ENCODE measurements at regions of chr5 and their contacts with region 1.

Region 1: DNA sequence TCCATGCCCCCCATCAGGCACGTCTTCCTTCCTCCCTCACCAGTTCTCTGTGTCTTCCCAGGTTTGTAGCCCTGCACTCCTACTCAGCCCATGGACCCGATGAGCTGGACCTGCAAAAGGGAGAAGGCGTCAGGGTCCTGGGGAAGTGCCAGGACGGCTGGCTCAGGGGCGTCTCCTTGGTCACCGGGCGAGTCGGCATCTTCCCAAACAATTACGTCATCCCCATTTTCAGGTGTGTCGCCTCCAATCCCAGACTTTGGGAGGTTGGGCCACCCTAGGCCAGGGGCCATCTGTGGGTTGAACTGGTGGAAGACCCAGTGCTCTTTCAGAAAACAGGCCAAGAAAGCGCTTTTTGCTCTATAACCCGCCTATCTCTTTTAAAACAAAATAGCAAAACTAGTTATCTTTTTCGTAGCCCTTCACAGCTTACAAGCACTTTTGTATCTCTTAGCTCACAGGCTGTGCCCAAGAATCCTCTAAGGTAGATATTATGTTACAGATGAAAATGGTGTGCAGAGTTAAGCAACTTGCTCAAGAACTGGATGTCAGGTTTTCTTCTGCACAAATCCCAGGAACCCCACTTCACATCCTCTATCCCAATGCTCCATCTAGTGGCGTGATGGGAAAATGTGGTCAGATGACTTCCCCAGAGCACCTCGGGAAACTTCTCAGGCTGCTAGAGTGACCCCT is 56.2 kb downstream of the PLAC8L1 start:
- ATAC-seq: peak; percentile 50 to 90 (median 76)
- H3K4me3 ChIP-seq: no peak overlapping the region
- H3K27ac ChIP-seq: no peak overlapping the region
- H3K4me1 ChIP-seq: peaks cover 0 to 4% of the 10 kb centered on the region in 2 donors

Region 2: GRCh38 chr5:144191998-144192397 is 1857.2 kb before region 1 on chr5:
- in situ Hi-C with region 1: loop called in 2 of 9 experiments (anchors 25 kb)
- ATAC-seq: peak in 4 of 8 experiments; percentile 54 to 86 (median 78)
- H3K4me3 ChIP-seq: no peak overlapping the region
- H3K27ac ChIP-seq: no peak overlapping the region
- H3K4me1 ChIP-seq: no peaks in the 10 kb centered on the region

Region 3: GRCh38 chr5:145681686-145682085 is 367.5 kb before region 1 on chr5:
- in situ Hi-C with region 1: loop called in 1 of 9 experiments (anchors 25 kb)
- ATAC-seq: peak in 5 of 8 experiments; percentile 53 to 100 (median 92)
- H3K4me3 ChIP-seq: no peak overlapping the region
- H3K27ac ChIP-seq: no peak overlapping the region
- H3K4me1 ChIP-seq: no peaks in the 10 kb centered on the region

Region 4: DNA sequence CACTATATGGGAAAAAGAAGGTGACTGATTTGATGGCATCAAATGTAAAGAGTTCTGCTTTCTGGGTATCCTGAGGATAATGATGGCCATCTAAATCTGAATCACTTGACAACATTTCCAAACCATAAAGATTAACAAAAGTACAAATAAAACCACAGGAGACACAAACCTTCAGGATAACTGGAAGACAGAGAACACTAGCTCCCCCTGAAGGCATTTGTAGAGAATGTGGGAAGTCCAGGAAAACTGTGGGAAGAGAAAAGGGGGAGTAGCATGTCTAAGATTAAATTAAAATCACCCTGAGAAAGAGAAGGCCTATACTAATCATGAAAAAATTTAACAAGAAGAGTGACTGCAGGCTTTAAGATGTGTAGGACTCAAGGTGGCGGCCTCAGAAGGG is 330.2 kb before region 1 on chr5:
- in situ Hi-C with region 1: loop called in 1 of 9 experiments (anchors 25 kb)
- ATAC-seq: peak in 3 of 8 experiments; percentile 32 to 50 (median 33)
- H3K4me3 ChIP-seq: no peak overlapping the region
- H3K27ac ChIP-seq: no peak overlapping the region
- H3K4me1 ChIP-seq: peaks cover 2 to 4% of the 10 kb centered on the region in 2 donors

Region 5: DNA sequence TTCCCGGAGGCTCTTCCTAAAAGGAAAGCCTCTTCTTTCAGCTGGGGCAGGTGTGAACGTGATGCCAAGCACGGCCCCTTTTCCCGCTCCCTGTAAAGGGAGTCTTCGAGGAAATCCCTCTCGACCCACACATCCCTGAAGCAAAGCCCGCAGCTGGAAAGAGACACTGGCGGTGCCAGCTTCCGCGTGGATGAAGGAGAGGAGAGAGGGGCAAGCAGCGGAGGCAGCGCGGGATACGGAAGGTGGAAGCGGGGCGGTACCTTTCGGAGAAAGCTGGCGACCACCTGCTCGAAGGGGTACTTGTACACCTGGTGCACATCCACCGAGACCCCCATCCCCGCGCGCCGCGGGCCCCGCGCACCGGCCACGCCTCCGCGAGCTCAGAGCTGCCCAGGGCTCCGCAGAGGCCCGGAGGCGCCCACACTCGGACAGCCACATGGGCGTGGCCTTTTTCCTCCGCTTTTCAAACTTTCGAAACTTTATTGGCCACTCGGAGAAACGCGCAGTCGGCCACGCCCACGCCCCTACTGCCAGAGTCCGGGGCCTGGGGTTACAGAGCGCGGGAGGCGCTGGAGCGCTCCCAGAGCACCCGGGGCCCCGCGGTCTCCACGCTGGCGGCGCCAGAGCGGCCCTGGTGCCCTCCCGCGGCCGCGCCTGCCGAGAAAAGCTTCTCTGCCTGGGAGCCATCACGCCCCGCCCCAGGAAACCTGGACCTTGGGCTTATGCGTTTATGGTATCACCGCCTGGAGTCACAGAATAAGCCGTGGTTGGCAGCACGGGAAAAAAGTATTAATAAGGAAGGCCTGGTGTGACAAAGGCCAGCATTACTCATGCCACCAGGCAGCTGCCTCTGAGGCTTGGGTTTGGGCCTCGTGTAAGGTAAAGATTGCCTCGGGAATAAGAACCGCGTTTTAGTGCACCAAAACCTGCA is 214.0 kb before region 1 on chr5 and contains the start of gene PRELID2:
- in situ Hi-C with region 1: loop called in 1 of 9 experiments (anchors 25 kb)
- ATAC-seq: peak; percentile 86 to 98 (median 98)
- H3K4me3 ChIP-seq: peak within 1 kb of the TSS; percentile 41 to 58 (median 45)
- H3K27ac ChIP-seq: peak within 1 kb of the TSS in 1 of 2 donors; percentile 12
- H3K4me1 ChIP-seq: peaks cover 9 to 14% of the 10 kb centered on the region in 2 donors
- total RNA-seq, gene PRELID2: 1.2 to 17.1 (median 9.9) TPM

Region 6: DNA sequence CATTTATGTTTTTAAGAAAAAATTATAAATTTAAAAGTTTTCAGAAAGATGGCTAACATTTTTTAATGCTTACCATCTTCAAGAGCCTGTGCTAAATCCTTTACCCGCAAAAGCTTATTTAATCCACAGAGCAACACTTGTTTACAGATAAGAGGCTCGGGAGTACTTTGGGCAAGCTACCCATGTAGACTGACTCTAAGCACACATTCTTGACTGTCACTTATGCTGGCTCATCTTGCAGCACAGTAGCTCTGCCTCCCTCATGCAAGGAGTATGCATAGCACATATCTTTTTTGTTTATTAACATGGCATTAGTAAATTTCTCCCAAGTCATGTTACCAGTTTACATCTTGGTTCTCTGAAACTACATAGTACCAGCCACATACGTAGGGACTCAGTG is 98.1 kb before region 1 on chr5:
- in situ Hi-C with region 1: no loop called
- ATAC-seq: peak in 1 of 8 experiments; percentile 42
- H3K4me3 ChIP-seq: no peak overlapping the region
- H3K27ac ChIP-seq: no peak overlapping the region
- H3K4me1 ChIP-seq: peaks cover 0 to 3% of the 10 kb centered on the region in 2 donors